Activated T-helper 1 cell treated with anti-CD3 and anti-CD28 coated beads, Interleukin-12 subunit alpha, Interleukin-12 subunit beta, Interleukin-2, Interleukin-4 antibody, amounts not matched to agents 30 ng/mL and 10 ng/mL and 1 ng/mL, durations not matched to agents 14 hours and 24 hours and 36 hours (primary cell): ENCODE measurements at regions of chr20 and their contacts with region 1.

Region 1: GRCh38 chr20:32249030-32249738 is 28.3 kb upstream of the KIF3B start:
- DNase-seq: peak; percentile 46
- H3K4me3 Mint-ChIP-seq: peak overlapping the region; percentile 32
- H3K27ac Mint-ChIP-seq: peak overlapping the region; percentile 94
- H3K4me1 Mint-ChIP-seq: peaks cover 58% of the 10 kb centered on the region
- H3K27me3 Mint-ChIP-seq: no peaks in the 10 kb centered on the region

Region 2: GRCh38 chr20:32109392-32110172 is 139.6 kb before region 1 on chr20 and contains the start of gene TM9SF4:
- intact Hi-C with region 1: loop called (anchors 1 kb)
- DNase-seq: peak; percentile 84
- H3K4me3 Mint-ChIP-seq: peak within 1 kb of the TSS; percentile 92
- H3K27ac Mint-ChIP-seq: peak within 1 kb of the TSS; percentile 99
- H3K4me1 Mint-ChIP-seq: peaks cover 35% of the 10 kb centered on the region
- H3K27me3 Mint-ChIP-seq: peaks cover 4% of the 10 kb centered on the region
- total RNA-seq, gene TM9SF4: 49.5 and 49.6 TPM in 2 replicates

Region 3: GRCh38 chr20:32231847-32232246 is 17.3 kb before region 1 on chr20:
- intact Hi-C with region 1: loop called (anchors 1 kb)
- DNase-seq: peak; percentile 31
- H3K4me3 Mint-ChIP-seq: peak overlapping the region; percentile 69
- H3K27ac Mint-ChIP-seq: peak overlapping the region; percentile 95
- H3K4me1 Mint-ChIP-seq: peaks cover 40% of the 10 kb centered on the region
- H3K27me3 Mint-ChIP-seq: no peaks in the 10 kb centered on the region

Region 4: DNA sequence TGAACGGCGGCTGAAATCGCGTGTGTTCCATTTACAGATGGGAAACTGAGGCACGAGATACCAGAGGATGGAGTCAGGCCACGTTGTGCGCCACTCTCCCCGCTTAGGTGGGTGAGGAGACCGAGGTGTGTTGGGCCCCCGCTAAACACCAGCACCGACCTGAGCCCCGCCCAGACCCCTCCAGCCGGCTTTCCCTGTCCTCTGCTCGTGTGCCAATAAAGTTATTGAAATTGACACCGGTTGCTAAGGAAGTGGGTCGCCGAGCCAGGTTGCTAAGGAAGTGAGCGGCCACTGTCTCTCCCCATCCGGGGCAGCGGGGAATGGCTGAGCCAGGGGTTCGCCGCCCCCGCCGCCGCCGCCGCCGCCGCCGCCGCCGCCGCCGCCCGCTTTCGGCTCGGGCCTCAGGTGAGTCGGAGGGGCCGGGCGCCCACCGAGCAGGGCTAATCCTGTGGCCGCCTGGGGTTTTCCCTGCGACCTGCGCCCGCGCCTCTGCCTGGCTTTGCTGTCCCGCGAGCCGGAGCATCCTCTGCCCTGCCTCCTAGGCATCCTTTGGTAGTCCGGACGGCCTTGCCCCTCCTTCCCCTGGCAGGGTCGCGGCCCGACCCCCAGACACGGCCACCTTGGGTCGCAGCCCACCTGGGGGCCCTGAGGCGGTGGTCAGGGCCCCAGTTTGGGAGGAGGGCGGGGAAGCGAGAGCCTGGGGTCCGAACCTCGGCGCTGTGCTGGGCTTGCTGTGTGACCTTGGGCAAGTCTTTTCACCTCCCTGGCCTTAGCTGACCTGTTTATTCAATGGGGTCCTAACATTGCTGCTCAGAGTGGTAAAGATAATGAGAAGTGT is 28.4 kb after region 1 on chr20 and contains the start of gene KIF3B:
- intact Hi-C with region 1: loop called (anchors 1 kb)
- DNase-seq: peak; percentile 87
- H3K4me3 Mint-ChIP-seq: peak within 1 kb of the TSS; percentile 91
- H3K27ac Mint-ChIP-seq: peak within 1 kb of the TSS; percentile 84
- H3K4me1 Mint-ChIP-seq: peaks cover 49% of the 10 kb centered on the region
- H3K27me3 Mint-ChIP-seq: no peaks in the 10 kb centered on the region
- total RNA-seq, gene KIF3B: 38.1 and 39.1 TPM in 2 replicates

Region 5: DNA sequence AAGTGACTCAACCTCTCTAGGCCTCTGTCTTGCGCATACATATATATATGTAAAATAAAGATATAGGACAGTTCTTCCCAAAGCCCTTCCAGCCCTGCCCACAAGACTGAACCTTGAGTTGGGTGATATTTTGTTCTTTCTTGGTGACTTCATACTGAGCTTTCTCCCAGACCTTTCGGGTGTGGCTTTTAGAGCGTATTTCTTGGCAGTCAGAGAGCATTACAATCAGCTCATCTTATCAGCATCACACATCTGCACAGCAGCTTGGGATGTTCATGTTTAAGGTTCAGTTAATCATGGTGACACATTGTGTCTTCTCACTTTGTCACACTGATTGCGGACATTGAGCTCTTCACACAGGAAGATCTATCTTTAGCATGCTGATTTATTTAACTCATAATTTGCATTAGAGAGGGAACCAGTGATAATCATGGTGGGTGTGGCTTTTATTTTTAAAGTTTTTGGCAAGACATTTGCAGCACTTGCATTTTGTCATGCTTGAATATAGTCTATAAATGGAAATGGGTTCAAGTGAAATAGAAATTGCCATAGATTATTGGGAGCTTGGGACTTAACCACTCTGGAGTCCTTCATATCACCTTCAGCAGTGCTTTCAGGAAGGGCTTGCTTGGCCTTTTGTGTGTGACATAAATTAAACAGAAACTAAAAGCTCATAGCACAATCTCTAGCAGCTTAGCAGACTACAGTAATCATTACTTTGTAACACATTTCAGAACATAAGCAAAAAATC is 36.6 kb after region 1 on chr20:
- intact Hi-C with region 1: loop called (anchors 1 kb)
- DNase-seq: peak; percentile 41
- H3K4me3 Mint-ChIP-seq: peak overlapping the region; percentile 23
- H3K27ac Mint-ChIP-seq: peak overlapping the region; percentile 87
- H3K4me1 Mint-ChIP-seq: peaks cover 75% of the 10 kb centered on the region
- H3K27me3 Mint-ChIP-seq: no peaks in the 10 kb centered on the region